ENCODE measurements at regions of chr10 and their contacts with region 1.

Region 1: DNA sequence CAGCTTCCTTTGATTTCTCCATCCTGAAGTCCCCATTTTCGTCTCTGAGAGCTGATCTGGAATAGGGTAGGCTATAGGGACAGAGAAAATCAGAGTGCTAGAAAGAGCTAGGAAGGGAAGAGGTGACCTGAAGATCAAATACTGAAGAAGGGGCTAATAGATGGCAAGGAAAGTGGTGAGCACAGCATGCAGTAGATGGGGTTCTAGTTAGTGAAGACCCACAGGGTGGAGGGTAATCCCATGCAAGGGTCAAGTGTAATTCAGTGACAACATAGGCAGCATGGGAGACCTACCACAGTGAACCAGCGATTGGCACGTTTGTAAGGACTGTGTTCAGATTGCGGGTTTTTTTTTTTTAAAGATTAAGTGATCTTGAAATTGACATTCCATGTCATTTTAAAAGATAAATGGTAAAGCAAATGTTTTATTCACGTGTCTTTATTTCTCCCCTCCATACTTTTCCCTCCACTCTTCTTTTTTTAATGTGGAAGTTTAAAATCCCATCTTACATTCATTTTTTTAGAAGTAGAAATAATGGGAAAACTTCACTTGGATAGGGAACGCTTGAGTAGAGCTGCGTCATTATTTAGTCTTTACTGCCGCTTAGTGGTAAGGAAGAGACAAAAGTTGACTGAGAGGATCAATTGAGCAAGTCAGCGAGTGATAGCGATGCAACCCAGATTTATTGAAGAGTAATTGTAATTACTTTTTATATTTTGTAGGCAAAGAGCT is 21.0 kb upstream of the ABI1 start:
- DNase-seq: peak; percentile 58
- H3K4me3 ChIP-seq: peak overlapping the region; percentile 12 to 53; a peak in 3 of 4 replicates
- H3K27ac ChIP-seq: no peak overlapping the region
- H3K4me1 ChIP-seq: peaks cover 0 to 2% of the 10 kb centered on the region in 2 experiments; a peak in 1 of 4 replicates
- H3K27me3 ChIP-seq: peaks cover 11% of the 10 kb centered on the region
- CTCF ChIP-seq: peak; percentile 84
- EP300 ChIP-seq: no peak
- RAD21 ChIP-seq: peak; percentile 91

Region 2: DNA sequence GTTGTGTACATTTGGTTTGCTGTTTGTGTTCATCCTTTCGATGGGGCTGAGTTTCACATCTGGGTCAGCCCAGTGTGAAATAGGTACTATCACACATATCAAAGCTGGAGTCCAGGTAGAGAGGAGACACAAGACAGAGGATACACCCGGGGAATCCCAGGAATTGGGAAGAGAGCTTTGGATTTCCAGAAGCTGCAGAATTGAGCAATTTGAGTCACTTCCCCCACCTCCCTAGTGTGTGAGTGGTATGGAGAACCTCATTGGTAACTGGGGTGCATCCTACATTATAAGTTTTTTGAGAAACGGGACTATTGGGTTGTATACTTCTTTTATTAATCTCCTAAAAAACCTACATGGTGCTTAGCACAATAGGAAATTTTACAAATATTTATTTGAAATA is 196.3 kb before region 1 on chr10:
- CTCF ChIA-PET with region 1: interaction called, 16 read pairs
- POLR2A ChIA-PET with region 1: no interaction called
- DNase-seq: no peak
- H3K4me3 ChIP-seq: no peak overlapping the region
- H3K27ac ChIP-seq: no peak overlapping the region
- H3K4me1 ChIP-seq: no peaks in the 10 kb centered on the region
- H3K27me3 ChIP-seq: no peaks in the 10 kb centered on the region
- CTCF ChIP-seq: no peak
- EP300 ChIP-seq: no peak
- RAD21 ChIP-seq: no peak

Region 3: DNA sequence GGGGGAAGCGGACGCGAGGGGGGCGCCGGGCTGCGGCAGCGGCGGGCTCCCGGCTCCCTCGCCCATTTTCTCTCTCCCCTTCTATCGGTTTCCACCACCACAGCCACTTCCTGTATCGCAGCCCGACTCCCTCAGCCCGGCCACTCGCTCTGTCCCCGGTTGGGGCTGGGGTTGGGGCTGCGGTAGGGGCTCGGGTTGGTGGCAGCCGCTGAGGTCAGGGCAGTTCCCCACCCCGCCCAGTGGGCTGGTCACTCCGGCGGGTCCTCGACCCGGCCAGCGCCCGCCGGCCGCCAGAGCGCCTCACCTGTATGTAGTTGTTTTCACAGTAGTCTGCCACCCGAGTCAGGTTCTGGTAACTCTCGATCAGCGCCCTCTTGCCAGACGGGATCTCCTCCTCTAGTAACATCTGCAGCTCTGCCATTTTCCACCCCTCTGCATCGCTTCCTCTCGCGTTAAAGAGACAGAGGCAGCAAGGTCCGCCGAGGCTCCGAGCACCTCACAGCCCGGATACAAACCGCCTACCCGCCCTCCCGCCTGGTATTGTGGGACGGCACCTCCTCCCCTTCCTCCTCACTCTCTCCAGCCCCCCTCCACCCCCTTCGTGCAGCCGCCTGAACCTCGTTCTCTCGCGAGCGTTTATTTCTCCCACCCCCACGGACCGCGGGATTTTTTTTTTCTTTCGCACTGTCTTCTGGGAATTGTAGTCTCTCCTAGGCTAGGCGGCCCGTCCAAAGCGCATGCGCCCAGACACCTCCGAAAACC is 21.1 kb before region 1 on chr10 and contains the start of gene ABI1:
- CTCF ChIA-PET with region 1: interaction called, 43 read pairs
- POLR2A ChIA-PET with region 1: no interaction called
- DNase-seq: peak; percentile 92
- H3K4me3 ChIP-seq: peak within 1 kb of the TSS; percentile 66 to 75
- H3K27ac ChIP-seq: peak within 1 kb of the TSS; percentile 92 to 95
- H3K4me1 ChIP-seq: peaks cover 5 to 11% of the 10 kb centered on the region in 2 experiments; a peak in 3 of 4 replicates
- H3K27me3 ChIP-seq: no peaks in the 10 kb centered on the region; the same call in 1 of the 2 replicates
- CTCF ChIP-seq: no peak
- EP300 ChIP-seq: peak in 1 of 2 experiments; percentile 47; a peak in 1 of 4 replicates
- RAD21 ChIP-seq: no peak
- polyA plus RNA-seq, gene ABI1: 36.7 and 47.5 TPM in 2 replicates

Region 4: DNA sequence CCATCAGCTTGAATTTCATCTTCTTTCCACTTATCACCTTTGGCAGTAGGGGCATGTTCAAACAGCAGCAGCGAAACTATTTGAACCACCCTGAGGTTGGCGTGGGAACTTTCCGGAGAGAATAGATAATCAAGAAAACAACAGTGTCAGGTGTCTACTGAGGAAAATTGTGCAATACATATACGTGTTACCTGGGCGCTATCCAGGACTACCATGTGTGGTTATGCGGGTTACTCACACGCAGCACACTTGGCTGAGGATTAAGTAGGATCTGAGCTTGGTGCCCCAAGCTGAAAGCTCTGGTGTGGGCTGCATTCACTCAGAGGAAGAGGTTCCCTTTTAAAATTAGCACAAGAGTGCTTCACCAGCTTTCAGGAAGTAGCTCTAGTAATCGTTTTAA is 12.2 kb before region 1 on chr10:
- CTCF ChIA-PET with region 1: interaction called, 39 read pairs
- POLR2A ChIA-PET with region 1: no interaction called
- DNase-seq: no peak
- H3K4me3 ChIP-seq: no peak overlapping the region
- H3K27ac ChIP-seq: no peak overlapping the region
- H3K4me1 ChIP-seq: no peaks in the 10 kb centered on the region
- H3K27me3 ChIP-seq: no peaks in the 10 kb centered on the region; the same call in 1 of the 2 replicates
- CTCF ChIP-seq: no peak
- EP300 ChIP-seq: no peak
- RAD21 ChIP-seq: no peak

Region 5: DNA sequence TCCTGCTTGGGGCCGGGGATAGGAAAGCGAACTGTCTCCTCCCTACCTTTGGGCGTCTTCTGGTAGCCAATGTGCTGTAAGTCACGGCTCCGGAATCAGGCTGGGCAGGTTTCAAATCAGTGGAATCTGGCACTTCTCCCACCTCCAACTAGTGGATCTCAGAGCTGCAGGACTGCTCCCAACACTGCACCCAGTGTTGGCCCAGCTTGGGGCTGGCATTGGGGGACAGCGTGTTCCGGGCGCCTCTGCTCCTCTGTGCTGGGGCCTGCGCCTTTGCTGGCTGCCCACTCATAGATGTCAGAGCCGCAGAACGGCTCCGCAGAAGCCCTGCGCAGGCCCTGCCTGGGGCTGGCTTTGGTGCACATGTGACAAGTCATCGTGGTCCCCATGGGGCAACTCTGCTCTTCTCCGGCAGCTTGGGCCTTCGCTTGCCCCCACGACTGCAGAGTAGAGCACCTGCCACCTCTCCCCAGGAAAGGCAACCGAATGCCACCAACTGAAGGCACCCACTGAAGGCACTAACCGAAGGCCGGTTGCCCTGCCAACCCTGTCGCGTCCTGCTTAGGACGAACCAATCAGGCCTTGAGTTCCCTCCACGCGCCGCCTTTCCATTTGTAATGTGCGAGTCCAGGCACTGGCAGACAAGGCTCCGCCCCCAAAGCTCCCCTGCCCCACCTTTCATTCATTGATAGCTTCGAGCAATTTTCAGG is 64.5 kb after region 1 on chr10:
- CTCF ChIA-PET with region 1: no interaction called
- POLR2A ChIA-PET with region 1: no interaction called
- DNase-seq: no peak
- H3K4me3 ChIP-seq: no peak overlapping the region
- H3K27ac ChIP-seq: no peak overlapping the region
- H3K4me1 ChIP-seq: no peaks in the 10 kb centered on the region
- H3K27me3 ChIP-seq: no peaks in the 10 kb centered on the region
- CTCF ChIP-seq: no peak
- EP300 ChIP-seq: no peak
- RAD21 ChIP-seq: no peak

Region 6: GRCh38 chr10:27088119-27089044 is 206.6 kb after region 1 on chr10:
- CTCF ChIA-PET with region 1: no interaction called
- POLR2A ChIA-PET with region 1: no interaction called
- DNase-seq: no peak
- H3K4me3 ChIP-seq: no peak overlapping the region
- H3K27ac ChIP-seq: no peak overlapping the region
- H3K4me1 ChIP-seq: no peaks in the 10 kb centered on the region
- H3K27me3 ChIP-seq: no peaks in the 10 kb centered on the region
- CTCF ChIP-seq: no peak
- EP300 ChIP-seq: no peak
- RAD21 ChIP-seq: no peak

Region 7: DNA sequence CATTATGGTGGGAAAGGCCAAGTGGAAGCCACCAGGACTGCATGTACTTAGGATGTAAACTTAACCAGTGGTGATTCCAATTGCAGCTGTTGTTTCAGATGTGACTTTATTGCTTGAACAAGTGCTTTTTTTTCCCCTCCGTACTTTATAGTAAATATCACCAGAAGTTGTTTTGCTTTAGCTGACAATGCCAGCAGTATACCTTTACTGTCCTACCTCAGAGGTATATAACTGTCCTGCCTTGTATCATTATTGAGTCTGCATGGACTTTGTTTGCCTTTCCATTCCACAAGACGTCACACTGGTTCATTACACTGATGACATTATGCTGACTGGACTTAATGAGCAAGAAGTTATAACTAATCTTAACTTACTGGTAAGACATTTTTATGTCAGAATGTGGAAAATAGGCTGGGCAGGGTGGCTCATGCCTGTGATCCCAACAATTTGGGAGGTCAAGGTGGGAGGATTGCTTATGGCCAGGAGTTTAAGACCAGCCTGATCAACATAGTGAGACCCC is 545.2 kb after region 1 on chr10:
- CTCF ChIA-PET with region 1: no interaction called
- POLR2A ChIA-PET with region 1: no interaction called
- DNase-seq: no peak
- H3K4me3 ChIP-seq: no peak overlapping the region
- H3K27ac ChIP-seq: no peak overlapping the region
- H3K4me1 ChIP-seq: no peaks in the 10 kb centered on the region
- H3K27me3 ChIP-seq: no peaks in the 10 kb centered on the region
- CTCF ChIP-seq: no peak
- EP300 ChIP-seq: no peak
- RAD21 ChIP-seq: no peak

Measured in SK-N-SH (cell line).